T-cell (primary cell): ENCODE measurements at regions of chr16 and their contacts with region 1.

Region 1: GRCh38 chr16:50806099-50807062 is 64.5 kb downstream of the CYLD start:
- DNase-seq: peak; percentile 61 to 94 (median 80)
- ATAC-seq: peak; percentile 91 to 93 (median 92)
- H3K4me3 ChIP-seq: peak overlapping the region in 1 of 2 donors; percentile 22
- H3K4me3 Mint-ChIP-seq: peak overlapping the region; percentile 63 to 78 (median 65)
- H3K27ac ChIP-seq: peak overlapping the region; percentile 5
- H3K27ac Mint-ChIP-seq: peak overlapping the region; percentile 72 to 78
- H3K4me1 ChIP-seq: peaks cover 0 to 15% of the 10 kb centered on the region in 2 experiments
- H3K4me1 Mint-ChIP-seq: peaks cover 13 to 21% (median 16%) of the 10 kb centered on the region in 3 donors
- H3K27me3 ChIP-seq: no peaks in the 10 kb centered on the region
- H3K27me3 Mint-ChIP-seq: no peaks in the 10 kb centered on the region

Region 2: GRCh38 chr16:50065624-50066481 is 740.5 kb before region 1 on chr16 and contains the start of gene HEATR3:
- CTCF ChIA-PET with region 1: interaction called in 1 of 2 experiments, 16 read pairs
- POLR2A ChIA-PET with region 1: no interaction called
- DNase-seq: peak; percentile 80 to 98 (median 91)
- ATAC-seq: peak; percentile 84 to 87 (median 86)
- H3K4me3 ChIP-seq: peak within 1 kb of the TSS; percentile 80 to 84
- H3K4me3 Mint-ChIP-seq: peak within 1 kb of the TSS; percentile 86 to 93 (median 87)
- H3K27ac ChIP-seq: peak within 1 kb of the TSS; percentile 56
- H3K27ac Mint-ChIP-seq: peak within 1 kb of the TSS; percentile 88 to 92
- H3K4me1 ChIP-seq: peaks cover 13 to 24% of the 10 kb centered on the region in 2 experiments
- H3K4me1 Mint-ChIP-seq: peaks cover 39 to 44% (median 41%) of the 10 kb centered on the region in 3 donors
- H3K27me3 ChIP-seq: no peaks in the 10 kb centered on the region
- H3K27me3 Mint-ChIP-seq: no peaks in the 10 kb centered on the region
- total RNA-seq, gene HEATR3: 17.0 to 28.4 (median 24.6) TPM

Region 3: GRCh38 chr16:50297301-50298067 is 508.9 kb before region 1 on chr16:
- CTCF ChIA-PET with region 1: no interaction called
- POLR2A ChIA-PET with region 1: no interaction called
- DNase-seq: no peak
- ATAC-seq: no peak
- H3K4me3 ChIP-seq: no peak overlapping the region
- H3K4me3 Mint-ChIP-seq: no peak overlapping the region
- H3K27ac ChIP-seq: no peak overlapping the region
- H3K27ac Mint-ChIP-seq: peak overlapping the region; percentile 15 to 76
- H3K4me1 ChIP-seq: peaks cover 0 to 13% of the 10 kb centered on the region in 2 experiments
- H3K4me1 Mint-ChIP-seq: peaks cover 0 to 6% (median 6%) of the 10 kb centered on the region in 3 donors
- H3K27me3 ChIP-seq: no peaks in the 10 kb centered on the region
- H3K27me3 Mint-ChIP-seq: no peaks in the 10 kb centered on the region

Region 4: DNA sequence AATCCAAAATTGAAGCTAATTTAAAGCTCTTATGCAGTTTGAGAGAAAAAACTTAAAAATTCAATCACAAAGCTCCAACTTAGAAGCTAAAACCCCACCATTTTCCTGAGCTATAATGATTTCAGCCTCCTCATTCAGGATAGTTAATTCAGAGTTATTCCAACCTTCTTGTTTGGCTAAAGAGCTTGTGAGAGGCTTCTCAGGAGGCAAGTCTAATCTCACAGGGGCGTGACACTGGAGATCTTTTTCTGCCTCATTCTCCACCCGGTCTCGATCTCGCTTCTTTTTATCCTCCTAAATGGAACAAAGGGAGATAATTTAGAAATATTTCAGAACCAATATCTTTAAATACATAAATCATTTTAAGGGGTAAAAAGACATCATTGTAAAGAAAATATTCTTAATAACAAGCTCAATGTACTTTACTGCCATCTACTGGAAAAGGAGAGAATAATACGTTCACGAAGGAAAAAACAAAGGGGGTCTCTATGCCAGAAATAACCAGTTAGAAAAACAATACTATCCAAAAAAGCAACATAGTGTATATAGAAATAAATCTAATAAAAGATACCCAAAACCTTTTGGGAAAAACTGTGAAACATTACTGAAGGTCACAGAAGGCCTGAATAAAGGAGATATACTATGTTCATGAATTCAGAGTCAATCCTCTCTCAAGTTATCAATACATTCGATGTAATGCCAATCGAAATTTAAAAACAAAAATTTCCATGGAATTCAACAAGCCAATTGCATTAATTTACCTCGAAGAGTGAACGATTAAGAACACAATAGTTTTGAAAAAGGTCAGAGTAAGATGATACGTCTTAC is 451.5 kb before region 1 on chr16:
- CTCF ChIA-PET with region 1: interaction called in 1 of 2 experiments, 19 read pairs
- POLR2A ChIA-PET with region 1: no interaction called
- DNase-seq: peak in 2 of 35 experiments; percentile 34 to 51
- ATAC-seq: no peak
- H3K4me3 ChIP-seq: no peak overlapping the region
- H3K4me3 Mint-ChIP-seq: no peak overlapping the region
- H3K27ac ChIP-seq: no peak overlapping the region
- H3K27ac Mint-ChIP-seq: peak overlapping the region; percentile 0 to 64
- H3K4me1 ChIP-seq: no peaks in the 10 kb centered on the region
- H3K4me1 Mint-ChIP-seq: peaks cover 24 to 54% (median 25%) of the 10 kb centered on the region in 3 donors
- H3K27me3 ChIP-seq: no peaks in the 10 kb centered on the region
- H3K27me3 Mint-ChIP-seq: no peaks in the 10 kb centered on the region

Region 5: GRCh38 chr16:50671644-50672260 is 134.6 kb before region 1 on chr16:
- CTCF ChIA-PET with region 1: interaction called, 4 to 62 read pairs
- POLR2A ChIA-PET with region 1: no interaction called
- DNase-seq: peak in 20 of 35 experiments; percentile 32 to 75 (median 40)
- ATAC-seq: no peak
- H3K4me3 ChIP-seq: peak overlapping the region in 1 of 2 donors; percentile 3
- H3K4me3 Mint-ChIP-seq: peak overlapping the region in 2 of 3 donors; percentile 13 to 19
- H3K27ac ChIP-seq: no peak overlapping the region
- H3K27ac Mint-ChIP-seq: peak overlapping the region; percentile 77 to 79
- H3K4me1 ChIP-seq: peaks cover 6 to 30% of the 10 kb centered on the region in 2 experiments
- H3K4me1 Mint-ChIP-seq: peaks cover 31 to 44% (median 40%) of the 10 kb centered on the region in 3 donors
- H3K27me3 ChIP-seq: no peaks in the 10 kb centered on the region
- H3K27me3 Mint-ChIP-seq: no peaks in the 10 kb centered on the region

Region 6: GRCh38 chr16:50776037-50776436 is 30.3 kb before region 1 on chr16:
- CTCF ChIA-PET with region 1: interaction called, 3 to 20 read pairs
- POLR2A ChIA-PET with region 1: no interaction called
- DNase-seq: no peak
- ATAC-seq: no peak
- H3K4me3 ChIP-seq: no peak overlapping the region
- H3K4me3 Mint-ChIP-seq: no peak overlapping the region
- H3K27ac ChIP-seq: peak overlapping the region; percentile 20
- H3K27ac Mint-ChIP-seq: no peak overlapping the region
- H3K4me1 ChIP-seq: peaks cover 8 to 10% of the 10 kb centered on the region in 2 experiments
- H3K4me1 Mint-ChIP-seq: peaks cover 76 to 78% (median 78%) of the 10 kb centered on the region in 3 donors
- H3K27me3 ChIP-seq: no peaks in the 10 kb centered on the region
- H3K27me3 Mint-ChIP-seq: no peaks in the 10 kb centered on the region

Region 7: GRCh38 chr16:50989047-50989446 is 182.7 kb after region 1 on chr16:
- CTCF ChIA-PET with region 1: no interaction called
- POLR2A ChIA-PET with region 1: no interaction called
- DNase-seq: no peak
- ATAC-seq: no peak
- H3K4me3 ChIP-seq: no peak overlapping the region
- H3K4me3 Mint-ChIP-seq: no peak overlapping the region
- H3K27ac ChIP-seq: no peak overlapping the region
- H3K27ac Mint-ChIP-seq: no peak overlapping the region
- H3K4me1 ChIP-seq: no peaks in the 10 kb centered on the region
- H3K4me1 Mint-ChIP-seq: no peaks in the 10 kb centered on the region
- H3K27me3 ChIP-seq: no peaks in the 10 kb centered on the region
- H3K27me3 Mint-ChIP-seq: peaks cover 6 to 18% of the 10 kb centered on the region in 2 donors